ENCODE measurements at regions of chr3 and their contacts with region 1.

Region 1: GRCh38 chr3:46909535-46910442 is 32.3 kb downstream of the PTH1R start:
- DNase-seq: peak; percentile 88
- ATAC-seq: peak; percentile 84
- H3K4me3 Mint-ChIP-seq: no peak overlapping the region
- H3K27ac Mint-ChIP-seq: no peak overlapping the region
- H3K4me1 Mint-ChIP-seq: peaks cover 16% of the 10 kb centered on the region
- H3K27me3 Mint-ChIP-seq: no peaks in the 10 kb centered on the region

Region 2: GRCh38 chr3:46829699-46830208 is 80.0 kb before region 1 on chr3:
- CTCF ChIA-PET with region 1: no interaction called
- POLR2A ChIA-PET with region 1: no interaction called
- DNase-seq: peak; percentile 35
- ATAC-seq: peak; percentile 70
- H3K4me3 Mint-ChIP-seq: no peak overlapping the region
- H3K27ac Mint-ChIP-seq: no peak overlapping the region
- H3K4me1 Mint-ChIP-seq: peaks cover 6% of the 10 kb centered on the region
- H3K27me3 Mint-ChIP-seq: no peaks in the 10 kb centered on the region

Region 3: GRCh38 chr3:46871222-46871621 is 38.6 kb before region 1 on chr3:
- CTCF ChIA-PET with region 1: interaction called, 10 read pairs
- POLR2A ChIA-PET with region 1: no interaction called
- DNase-seq: no peak
- ATAC-seq: no peak
- H3K4me3 Mint-ChIP-seq: no peak overlapping the region
- H3K27ac Mint-ChIP-seq: no peak overlapping the region
- H3K4me1 Mint-ChIP-seq: peaks cover 2% of the 10 kb centered on the region
- H3K27me3 Mint-ChIP-seq: peaks cover 5% of the 10 kb centered on the region

Region 4: GRCh38 chr3:46895204-46895660 is 14.6 kb before region 1 on chr3:
- CTCF ChIA-PET with region 1: interaction called, 10 read pairs
- POLR2A ChIA-PET with region 1: no interaction called
- DNase-seq: peak; percentile 82
- ATAC-seq: peak; percentile 75
- H3K4me3 Mint-ChIP-seq: no peak overlapping the region
- H3K27ac Mint-ChIP-seq: no peak overlapping the region
- H3K4me1 Mint-ChIP-seq: peaks cover 3% of the 10 kb centered on the region
- H3K27me3 Mint-ChIP-seq: peaks cover 41% of the 10 kb centered on the region